Naive thymus-derived CD4-positive, alpha-beta T cell (primary cell): ENCODE measurements at regions of chr18 and their contacts with region 1.

Region 1: DNA sequence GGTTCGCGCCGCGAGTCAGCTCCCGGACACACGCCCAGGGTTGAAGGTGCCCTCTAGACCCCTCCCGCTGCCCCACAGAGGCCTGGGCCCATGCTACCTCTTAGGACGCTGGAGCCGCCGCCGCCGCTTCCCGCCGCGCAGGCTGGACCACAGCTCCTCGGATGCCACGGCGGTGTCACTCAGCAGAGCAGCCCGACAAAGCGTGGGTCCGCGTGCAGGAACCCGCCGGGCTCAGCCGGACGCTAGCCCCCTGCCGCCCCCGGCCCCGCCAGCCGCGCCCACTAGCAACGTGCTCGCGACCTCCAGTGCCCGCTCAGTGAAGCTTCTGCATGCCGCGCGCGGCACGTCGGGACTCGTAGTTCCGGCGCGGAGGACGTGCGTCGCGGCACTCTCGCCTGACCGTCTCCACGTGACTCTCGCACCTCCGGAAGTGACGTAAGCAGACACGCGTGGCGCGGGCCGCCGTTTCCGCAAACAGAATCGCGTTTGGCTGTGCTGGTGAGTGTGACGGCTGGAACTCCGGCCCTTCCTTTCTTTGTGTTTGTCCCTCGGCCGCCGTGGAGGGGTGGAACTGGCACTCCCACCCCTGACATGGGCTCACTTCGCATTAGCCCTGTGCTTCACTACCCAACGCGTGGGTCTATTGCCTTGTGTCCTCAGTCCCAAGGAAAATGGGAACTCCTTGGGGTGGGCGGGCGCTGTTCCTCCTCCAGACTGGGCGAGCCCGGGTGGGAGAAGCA is at the starts of genes FAM210A and RNMT:
- DNase-seq: peak; percentile 82 to 95 (median 93)
- ATAC-seq: peak; percentile 96
- H3K4me3 ChIP-seq: peak within 1 kb of the TSS; percentile 95
- H3K4me3 Mint-ChIP-seq: peak within 1 kb of the TSS; percentile 85 to 97 (median 90)
- H3K27ac ChIP-seq: peak within 1 kb of the TSS; percentile 98
- H3K27ac Mint-ChIP-seq: peak within 1 kb of the TSS; percentile 82 to 99 (median 96)
- H3K4me1 ChIP-seq: peaks cover 17 to 38% of the 10 kb centered on the region in 2 donors
- H3K4me1 Mint-ChIP-seq: peaks cover 43 to 69% (median 60%) of the 10 kb centered on the region in 7 donors
- H3K27me3 ChIP-seq: no peaks in the 10 kb centered on the region
- H3K27me3 Mint-ChIP-seq: no peaks in the 10 kb centered on the region
- total RNA-seq, gene FAM210A: 5.9 to 31.5 (median 8.1) TPM
- total RNA-seq, gene RNMT: 47.0 to 101 (median 53.7) TPM

Region 2: GRCh38 chr18:12376718-12377555 is 1349.5 kb before region 1 on chr18 and contains the start of gene AFG3L2:
- CTCF ChIA-PET with region 1: no interaction called
- POLR2A ChIA-PET with region 1: interaction called, 5 read pairs
- intact Hi-C with region 1: loop called in 1 of 2 experiments (anchors 1 kb)
- DNase-seq: peak; percentile 99 to 100 (median 100)
- ATAC-seq: peak; percentile 93
- H3K4me3 ChIP-seq: peak within 1 kb of the TSS; percentile 93
- H3K4me3 Mint-ChIP-seq: peak within 1 kb of the TSS; percentile 85 to 93 (median 92)
- H3K27ac ChIP-seq: peak within 1 kb of the TSS; percentile 97
- H3K27ac Mint-ChIP-seq: peak within 1 kb of the TSS; percentile 77 to 95 (median 90)
- H3K4me1 ChIP-seq: peaks cover 13 to 28% of the 10 kb centered on the region in 2 donors
- H3K4me1 Mint-ChIP-seq: peaks cover 32 to 52% (median 46%) of the 10 kb centered on the region in 7 donors
- H3K27me3 ChIP-seq: no peaks in the 10 kb centered on the region
- H3K27me3 Mint-ChIP-seq: peaks cover 0 to 22% (median 0%) of the 10 kb centered on the region in 5 donors
- total RNA-seq, gene AFG3L2: 26.3 to 42.3 (median 32.0) TPM

Region 3: GRCh38 chr18:12990967-12991838 is 735.2 kb before region 1 on chr18 and contains the start of gene CEP192:
- CTCF ChIA-PET with region 1: no interaction called
- POLR2A ChIA-PET with region 1: no interaction called
- intact Hi-C with region 1: loop called (anchors 1 to 5 kb)
- DNase-seq: peak; percentile 90 to 99 (median 97)
- ATAC-seq: peak; percentile 99
- H3K4me3 ChIP-seq: peak within 1 kb of the TSS; percentile 85
- H3K4me3 Mint-ChIP-seq: peak within 1 kb of the TSS in 9 of 10 donors; percentile 90 to 99 (median 98)
- H3K27ac ChIP-seq: peak within 1 kb of the TSS; percentile 82
- H3K27ac Mint-ChIP-seq: peak within 1 kb of the TSS; percentile 88 to 97 (median 93)
- H3K4me1 ChIP-seq: peaks cover 27 to 29% of the 10 kb centered on the region in 2 donors
- H3K4me1 Mint-ChIP-seq: peaks cover 10 to 29% (median 20%) of the 10 kb centered on the region in 7 donors
- H3K27me3 ChIP-seq: no peaks in the 10 kb centered on the region
- H3K27me3 Mint-ChIP-seq: peaks cover 0 to 1% (median 0%) of the 10 kb centered on the region in 5 donors
- total RNA-seq, gene CEP192: 30.9 to 45.0 (median 39.7) TPM

Region 4: GRCh38 chr18:13375302-13376255 is 350.8 kb before region 1 on chr18:
- CTCF ChIA-PET with region 1: no interaction called
- POLR2A ChIA-PET with region 1: no interaction called
- intact Hi-C with region 1: loop called in 1 of 2 experiments (anchors 2 kb)
- DNase-seq: peak in 7 of 9 donors; percentile 29 to 81 (median 54)
- ATAC-seq: peak; percentile 77
- H3K4me3 ChIP-seq: peak overlapping the region; percentile 34
- H3K4me3 Mint-ChIP-seq: peak overlapping the region; percentile 56 to 86 (median 78)
- H3K27ac ChIP-seq: peak overlapping the region; percentile 83
- H3K27ac Mint-ChIP-seq: peak overlapping the region; percentile 92 to 99 (median 96)
- H3K4me1 ChIP-seq: peaks cover 10 to 64% of the 10 kb centered on the region in 2 donors
- H3K4me1 Mint-ChIP-seq: peaks cover 32 to 85% (median 77%) of the 10 kb centered on the region in 7 donors
- H3K27me3 ChIP-seq: no peaks in the 10 kb centered on the region
- H3K27me3 Mint-ChIP-seq: no peaks in the 10 kb centered on the region

Region 5: DNA sequence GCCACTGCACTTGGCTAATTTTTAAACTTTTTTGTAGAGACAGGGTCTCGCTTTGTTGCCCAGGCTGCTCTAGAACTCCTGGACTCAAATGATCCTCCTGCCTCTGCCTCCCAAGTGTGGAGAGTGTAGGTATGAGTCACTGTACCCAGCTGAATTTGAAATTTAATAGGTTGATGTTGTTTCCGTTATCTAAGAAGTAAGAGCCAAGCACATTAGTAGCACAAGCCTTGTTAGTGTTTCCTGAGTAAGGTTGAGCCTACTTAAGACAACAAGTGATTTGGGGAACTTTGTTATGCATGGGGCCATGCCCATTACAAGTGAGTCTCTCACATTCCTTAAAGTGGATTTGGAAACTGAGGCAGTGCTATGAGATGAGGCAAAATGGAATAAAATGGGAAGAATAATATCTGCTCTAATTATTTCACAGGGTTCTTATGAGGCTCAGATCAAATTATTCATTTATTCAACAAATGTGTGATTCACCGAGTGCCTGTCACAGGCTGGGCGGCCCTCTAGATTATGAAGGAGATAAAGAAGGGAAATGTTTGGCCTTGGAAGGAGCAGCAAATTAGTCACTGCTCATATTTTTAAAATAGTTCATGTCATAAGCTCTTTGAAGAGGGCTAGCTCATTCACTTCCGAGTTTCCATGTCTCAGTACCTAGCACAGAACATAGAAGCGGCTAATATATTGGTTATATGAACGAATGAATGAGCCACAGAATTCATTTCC is 290.6 kb before region 1 on chr18:
- CTCF ChIA-PET with region 1: no interaction called
- POLR2A ChIA-PET with region 1: no interaction called
- intact Hi-C with region 1: loop called in 1 of 2 experiments (anchors 10 kb)
- DNase-seq: no peak
- ATAC-seq: no peak
- H3K4me3 ChIP-seq: no peak overlapping the region
- H3K4me3 Mint-ChIP-seq: peak overlapping the region in 8 of 10 donors; percentile 12 to 91 (median 31)
- H3K27ac ChIP-seq: no peak overlapping the region
- H3K27ac Mint-ChIP-seq: peak overlapping the region in 8 of 9 donors; percentile 6 to 95 (median 92)
- H3K4me1 ChIP-seq: peaks cover 12 to 43% of the 10 kb centered on the region in 2 donors
- H3K4me1 Mint-ChIP-seq: peaks cover 31 to 65% (median 57%) of the 10 kb centered on the region in 7 donors
- H3K27me3 ChIP-seq: no peaks in the 10 kb centered on the region
- H3K27me3 Mint-ChIP-seq: no peaks in the 10 kb centered on the region

Region 6: DNA sequence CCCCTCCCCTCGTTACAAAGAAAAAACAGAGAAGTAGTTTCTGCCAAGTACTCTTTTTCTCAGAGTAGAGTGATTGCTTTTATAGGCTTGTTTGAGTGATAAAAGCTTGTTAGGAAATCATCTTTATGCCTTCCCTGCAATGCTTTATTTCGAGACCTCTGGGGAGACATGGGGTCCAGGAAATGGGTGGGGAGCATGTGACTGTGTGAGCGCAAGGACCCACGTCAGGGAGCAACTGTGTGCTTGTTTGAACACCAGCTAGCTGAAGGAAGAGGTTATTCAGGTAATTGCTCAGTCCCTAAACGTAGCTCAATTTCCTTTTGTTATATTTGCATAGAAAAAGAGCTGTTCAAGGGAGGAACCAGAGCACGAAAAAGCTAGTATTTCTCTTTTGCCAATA is 187.4 kb before region 1 on chr18:
- CTCF ChIA-PET with region 1: no interaction called
- POLR2A ChIA-PET with region 1: no interaction called
- intact Hi-C with region 1: loop called in 1 of 2 experiments (anchors 2 kb)
- DNase-seq: peak in 7 of 9 donors; percentile 68 to 86 (median 79)
- ATAC-seq: peak; percentile 92
- H3K4me3 ChIP-seq: no peak overlapping the region
- H3K4me3 Mint-ChIP-seq: peak overlapping the region; percentile 70 to 85 (median 74)
- H3K27ac ChIP-seq: peak overlapping the region; percentile 66
- H3K27ac Mint-ChIP-seq: peak overlapping the region; percentile 64 to 97 (median 90)
- H3K4me1 ChIP-seq: peaks cover 11 to 36% of the 10 kb centered on the region in 2 donors
- H3K4me1 Mint-ChIP-seq: peaks cover 28 to 80% (median 70%) of the 10 kb centered on the region in 7 donors
- H3K27me3 ChIP-seq: no peaks in the 10 kb centered on the region
- H3K27me3 Mint-ChIP-seq: no peaks in the 10 kb centered on the region

Region 7: GRCh38 chr18:13611601-13612195 is 114.7 kb before region 1 on chr18:
- CTCF ChIA-PET with region 1: no interaction called
- POLR2A ChIA-PET with region 1: no interaction called
- intact Hi-C with region 1: loop called (anchors 1 to 2 kb)
- DNase-seq: peak in 3 of 9 donors; percentile 8 to 17 (median 11)
- ATAC-seq: peak; percentile 2
- H3K4me3 ChIP-seq: peak overlapping the region; percentile 36
- H3K4me3 Mint-ChIP-seq: peak overlapping the region; percentile 82 to 97 (median 90)
- H3K27ac ChIP-seq: peak overlapping the region; percentile 61
- H3K27ac Mint-ChIP-seq: peak overlapping the region; percentile 77 to 96 (median 86)
- H3K4me1 ChIP-seq: peaks cover 34 to 49% of the 10 kb centered on the region in 2 donors
- H3K4me1 Mint-ChIP-seq: peaks cover 55 to 82% (median 73%) of the 10 kb centered on the region in 7 donors
- H3K27me3 ChIP-seq: no peaks in the 10 kb centered on the region
- H3K27me3 Mint-ChIP-seq: no peaks in the 10 kb centered on the region

Region 8: GRCh38 chr18:13813271-13813849 is 87.0 kb after region 1 on chr18:
- CTCF ChIA-PET with region 1: no interaction called
- POLR2A ChIA-PET with region 1: no interaction called
- intact Hi-C with region 1: no loop called
- DNase-seq: peak in 8 of 9 donors; percentile 14 to 51 (median 30)
- ATAC-seq: peak; percentile 82
- H3K4me3 ChIP-seq: no peak overlapping the region
- H3K4me3 Mint-ChIP-seq: no peak overlapping the region
- H3K27ac ChIP-seq: no peak overlapping the region
- H3K27ac Mint-ChIP-seq: peak overlapping the region in 1 of 9 donors; percentile 80
- H3K4me1 ChIP-seq: no peaks in the 10 kb centered on the region
- H3K4me1 Mint-ChIP-seq: peaks cover 0 to 4% (median 0%) of the 10 kb centered on the region in 7 donors
- H3K27me3 ChIP-seq: no peaks in the 10 kb centered on the region
- H3K27me3 Mint-ChIP-seq: peaks cover 0 to 13% (median 4%) of the 10 kb centered on the region in 5 donors